ENCODE measurements at regions of chr6 and their contacts with region 1.

Region 1: GRCh38 chr6:99618649-99619408 is 12.2 kb downstream of the PRDM13 start:
- DNase-seq: no peak
- ATAC-seq: no peak
- H3K4me3 ChIP-seq: no peak overlapping the region
- H3K4me3 Mint-ChIP-seq: no peak overlapping the region
- H3K27ac ChIP-seq: no peak overlapping the region
- H3K27ac Mint-ChIP-seq: no peak overlapping the region
- H3K4me1 ChIP-seq: peaks cover 12% of the 10 kb centered on the region
- H3K4me1 Mint-ChIP-seq: peaks cover 8% of the 10 kb centered on the region
- H3K27me3 ChIP-seq: peaks cover 43 to 44% of the 10 kb centered on the region in 2 experiments
- H3K27me3 Mint-ChIP-seq: peaks cover 77% of the 10 kb centered on the region
- CTCF ChIP-seq: no peak

Region 2: GRCh38 chr6:98384801-98385200 is 1234.0 kb before region 1 on chr6:
- CTCF ChIA-PET with region 1: no interaction called
- POLR2A ChIA-PET with region 1: no interaction called
- intact Hi-C with region 1: no loop called
- DNase-seq: no peak
- ATAC-seq: no peak
- H3K4me3 ChIP-seq: no peak overlapping the region
- H3K4me3 Mint-ChIP-seq: no peak overlapping the region
- H3K27ac ChIP-seq: no peak overlapping the region
- H3K27ac Mint-ChIP-seq: no peak overlapping the region
- H3K4me1 ChIP-seq: no peaks in the 10 kb centered on the region
- H3K4me1 Mint-ChIP-seq: no peaks in the 10 kb centered on the region
- H3K27me3 ChIP-seq: no peaks in the 10 kb centered on the region
- H3K27me3 Mint-ChIP-seq: no peaks in the 10 kb centered on the region
- CTCF ChIP-seq: no peak

Region 3: GRCh38 chr6:99603421-99604165 is 15.2 kb before region 1 on chr6:
- CTCF ChIA-PET with region 1: interaction called, 4 read pairs
- POLR2A ChIA-PET with region 1: no interaction called
- intact Hi-C with region 1: loop called in 1 of 2 experiments (anchors 2 kb)
- DNase-seq: peak in 4 of 9 experiments; percentile 22 to 51 (median 36)
- ATAC-seq: peak; percentile 59
- H3K4me3 ChIP-seq: peak overlapping the region; percentile 35 to 38
- H3K4me3 Mint-ChIP-seq: peak overlapping the region; percentile 72
- H3K27ac ChIP-seq: no peak overlapping the region
- H3K27ac Mint-ChIP-seq: no peak overlapping the region
- H3K4me1 ChIP-seq: peaks cover 29% of the 10 kb centered on the region
- H3K4me1 Mint-ChIP-seq: peaks cover 25% of the 10 kb centered on the region
- H3K27me3 ChIP-seq: peaks cover 63 to 67% of the 10 kb centered on the region in 2 experiments
- H3K27me3 Mint-ChIP-seq: peaks cover 72% of the 10 kb centered on the region
- CTCF ChIP-seq: no peak

Region 4: GRCh38 chr6:99645986-99646385 is 27.2 kb after region 1 on chr6:
- CTCF ChIA-PET with region 1: no interaction called
- POLR2A ChIA-PET with region 1: no interaction called
- intact Hi-C with region 1: no loop called
- DNase-seq: no peak
- ATAC-seq: no peak
- H3K4me3 ChIP-seq: no peak overlapping the region
- H3K4me3 Mint-ChIP-seq: no peak overlapping the region
- H3K27ac ChIP-seq: no peak overlapping the region
- H3K27ac Mint-ChIP-seq: no peak overlapping the region
- H3K4me1 ChIP-seq: no peaks in the 10 kb centered on the region
- H3K4me1 Mint-ChIP-seq: no peaks in the 10 kb centered on the region
- H3K27me3 ChIP-seq: peaks cover 0 to 2% of the 10 kb centered on the region in 2 experiments
- H3K27me3 Mint-ChIP-seq: peaks cover 37% of the 10 kb centered on the region
- CTCF ChIP-seq: no peak

Measured in CD8-positive, alpha-beta T cell (primary cell).